H1 (cell line): ENCODE measurements at regions of chr17 and their contacts with region 1.

Region 1: DNA sequence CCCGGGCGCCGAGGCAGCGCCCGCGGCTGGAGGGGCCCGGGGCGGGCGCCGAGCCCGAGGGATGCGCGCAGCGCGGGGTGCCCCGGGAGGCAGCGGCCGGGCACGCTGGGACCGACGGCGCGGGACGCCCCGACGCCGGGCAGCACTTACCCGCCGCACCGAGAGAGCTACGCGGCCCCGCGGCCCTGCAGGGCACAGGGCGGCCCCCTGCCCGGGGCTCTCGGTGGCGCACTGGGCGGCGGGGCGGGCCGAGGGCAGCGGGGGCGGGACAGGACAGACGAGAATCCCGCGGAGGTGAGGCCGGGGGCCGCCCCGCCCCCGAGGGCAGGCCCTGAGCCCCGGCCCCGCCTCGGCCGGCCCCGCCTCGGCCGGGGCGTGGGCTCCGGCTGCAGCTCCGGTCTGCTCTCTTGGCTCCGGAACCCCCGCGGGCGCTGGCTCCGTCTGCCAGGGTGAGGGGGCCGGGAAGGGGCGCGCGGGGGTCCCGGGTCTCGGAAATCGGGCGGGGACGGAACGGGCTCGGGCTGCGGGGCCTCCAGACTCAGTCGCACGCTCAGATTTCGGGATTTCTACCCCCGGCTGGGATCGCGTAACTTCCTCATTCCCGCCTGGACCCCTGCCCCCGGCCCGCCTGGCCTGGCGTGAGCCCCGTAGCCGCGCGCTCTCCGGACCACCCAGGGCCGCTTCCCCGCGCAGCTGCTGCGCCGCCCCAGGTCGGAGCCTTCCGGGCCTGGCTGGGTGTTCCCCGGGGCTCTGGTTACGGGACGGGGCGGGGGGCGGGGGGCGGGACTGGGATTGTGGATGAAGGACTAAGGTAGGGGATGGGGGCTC is at the start of gene PLD2:
- DNase-seq: peak in 1 of 2 experiments; percentile 89
- H3K4me3 ChIP-seq: peak within 1 kb of the TSS; percentile 68 to 97 (median 79)
- H3K27ac ChIP-seq: no peak within 1 kb of the TSS; the same call in 1 of the 2 replicates
- H3K4me1 ChIP-seq: peaks cover 0 to 5% (median 4%) of the 10 kb centered on the region in 4 experiments; a peak in 3 of 7 replicates
- H3K27me3 ChIP-seq: no peaks in the 10 kb centered on the region; a peak in 1 of 7 replicates
- CTCF ChIP-seq: no peak
- EP300 ChIP-seq: no peak
- POLR2A ChIP-seq: peak in 1 of 2 experiments; percentile 70; a peak in 2 of 3 replicates
- RAD21 ChIP-seq: no peak
- total RNA-seq, gene PLD2: 48.4 and 53.0 TPM in 2 replicates

Region 2: GRCh38 chr17:4648741-4649140 is 158.2 kb before region 1 on chr17:
- CTCF ChIA-PET with region 1: no interaction called
- POLR2A ChIA-PET with region 1: no interaction called
- DNase-seq: no peak
- H3K4me3 ChIP-seq: no peak overlapping the region
- H3K27ac ChIP-seq: no peak overlapping the region
- H3K4me1 ChIP-seq: 0 out of 7 replicates have a peak, but pooled peaks cover 0 to 3% (median 0%) of the 10 kb centered on the region in 4 experiments
- H3K27me3 ChIP-seq: peaks cover 0 to under 1% (median 0%) of the 10 kb centered on the region in 4 experiments; a peak in 3 of 7 replicates
- CTCF ChIP-seq: no peak
- EP300 ChIP-seq: no peak
- POLR2A ChIP-seq: no peak
- RAD21 ChIP-seq: no peak

Region 3: DNA sequence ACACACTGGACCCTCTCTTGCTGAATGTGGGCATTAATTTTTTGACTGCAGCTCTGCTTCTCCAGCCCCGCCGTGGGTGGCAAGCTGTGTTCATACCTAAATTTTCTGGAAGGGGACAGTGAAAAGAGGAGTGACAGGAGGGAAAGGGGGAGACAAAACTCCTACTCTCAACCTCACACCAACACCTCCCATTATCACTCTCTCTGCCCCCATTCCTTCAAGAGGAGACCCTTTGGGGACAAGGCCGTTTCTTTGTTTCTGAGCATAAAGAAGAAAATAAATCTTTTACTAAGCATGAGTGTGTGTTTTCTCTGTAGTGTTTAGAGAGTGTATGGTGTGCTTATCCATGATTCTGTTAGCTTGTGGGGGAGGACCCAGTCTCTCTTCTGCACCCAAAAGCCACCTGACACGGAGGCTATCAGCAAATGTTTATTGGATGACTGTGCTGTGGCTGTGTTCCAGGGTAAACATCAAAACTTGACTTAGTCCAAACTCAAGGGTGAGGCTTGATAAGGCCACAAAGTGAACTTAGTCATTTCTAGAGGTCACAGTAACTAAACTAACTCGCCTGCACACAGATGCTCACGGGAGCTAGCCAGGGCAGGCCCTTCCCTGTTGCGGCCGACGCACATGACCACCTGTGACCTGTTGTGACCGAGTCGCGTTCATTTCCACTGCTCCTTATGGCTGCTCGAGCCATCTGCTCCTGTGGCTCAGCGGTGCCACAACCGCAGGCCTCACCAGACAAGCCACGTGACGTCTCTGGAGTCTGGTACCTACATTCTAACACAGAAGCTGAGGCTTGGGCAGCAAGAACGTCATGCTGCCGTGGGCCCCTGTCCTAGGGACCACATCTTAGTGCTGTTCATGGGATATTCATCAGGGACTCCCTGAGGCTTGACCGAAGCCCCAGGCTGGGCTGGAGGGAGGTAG is 85.5 kb before region 1 on chr17:
- CTCF ChIA-PET with region 1: no interaction called
- POLR2A ChIA-PET with region 1: no interaction called
- DNase-seq: no peak
- H3K4me3 ChIP-seq: no peak overlapping the region
- H3K27ac ChIP-seq: no peak overlapping the region
- H3K4me1 ChIP-seq: no peaks in the 10 kb centered on the region
- H3K27me3 ChIP-seq: no peaks in the 10 kb centered on the region
- CTCF ChIP-seq: no peak
- EP300 ChIP-seq: no peak
- POLR2A ChIP-seq: no peak
- RAD21 ChIP-seq: no peak

Region 4: GRCh38 chr17:4796553-4796921 is 10.5 kb before region 1 on chr17:
- CTCF ChIA-PET with region 1: interaction called, 3 read pairs
- POLR2A ChIA-PET with region 1: interaction called, 25 read pairs
- DNase-seq: peak in 1 of 2 experiments; percentile 63
- H3K4me3 ChIP-seq: peak overlapping the region; percentile 96 to 100 (median 98)
- H3K27ac ChIP-seq: peak overlapping the region; percentile 70
- H3K4me1 ChIP-seq: no peaks in the 10 kb centered on the region; a peak in 1 of 7 replicates
- H3K27me3 ChIP-seq: no peaks in the 10 kb centered on the region; a peak in 1 of 7 replicates
- CTCF ChIP-seq: no peak
- EP300 ChIP-seq: no peak
- POLR2A ChIP-seq: peak in 1 of 2 experiments; percentile 6; a peak in 1 of 3 replicates
- RAD21 ChIP-seq: no peak

Region 5: GRCh38 chr17:4823373-4824089 is 16.5 kb after region 1 on chr17:
- CTCF ChIA-PET with region 1: interaction called, 5 read pairs
- POLR2A ChIA-PET with region 1: interaction called, 15 read pairs
- DNase-seq: no peak
- H3K4me3 ChIP-seq: no peak overlapping the region
- H3K27ac ChIP-seq: no peak overlapping the region
- H3K4me1 ChIP-seq: no peaks in the 10 kb centered on the region
- H3K27me3 ChIP-seq: no peaks in the 10 kb centered on the region
- CTCF ChIP-seq: peak in 1 of 3 experiments; percentile 19; a peak in 1 of 4 replicates
- EP300 ChIP-seq: no peak
- POLR2A ChIP-seq: no peak
- RAD21 ChIP-seq: 0 out of 4 replicates have a peak, but pooled peaks of 1 of the 2 experiments have one; percentile 6